MCF 10A (cell line): ENCODE measurements at regions of chr11 and their contacts with region 1.

Region 1: DNA sequence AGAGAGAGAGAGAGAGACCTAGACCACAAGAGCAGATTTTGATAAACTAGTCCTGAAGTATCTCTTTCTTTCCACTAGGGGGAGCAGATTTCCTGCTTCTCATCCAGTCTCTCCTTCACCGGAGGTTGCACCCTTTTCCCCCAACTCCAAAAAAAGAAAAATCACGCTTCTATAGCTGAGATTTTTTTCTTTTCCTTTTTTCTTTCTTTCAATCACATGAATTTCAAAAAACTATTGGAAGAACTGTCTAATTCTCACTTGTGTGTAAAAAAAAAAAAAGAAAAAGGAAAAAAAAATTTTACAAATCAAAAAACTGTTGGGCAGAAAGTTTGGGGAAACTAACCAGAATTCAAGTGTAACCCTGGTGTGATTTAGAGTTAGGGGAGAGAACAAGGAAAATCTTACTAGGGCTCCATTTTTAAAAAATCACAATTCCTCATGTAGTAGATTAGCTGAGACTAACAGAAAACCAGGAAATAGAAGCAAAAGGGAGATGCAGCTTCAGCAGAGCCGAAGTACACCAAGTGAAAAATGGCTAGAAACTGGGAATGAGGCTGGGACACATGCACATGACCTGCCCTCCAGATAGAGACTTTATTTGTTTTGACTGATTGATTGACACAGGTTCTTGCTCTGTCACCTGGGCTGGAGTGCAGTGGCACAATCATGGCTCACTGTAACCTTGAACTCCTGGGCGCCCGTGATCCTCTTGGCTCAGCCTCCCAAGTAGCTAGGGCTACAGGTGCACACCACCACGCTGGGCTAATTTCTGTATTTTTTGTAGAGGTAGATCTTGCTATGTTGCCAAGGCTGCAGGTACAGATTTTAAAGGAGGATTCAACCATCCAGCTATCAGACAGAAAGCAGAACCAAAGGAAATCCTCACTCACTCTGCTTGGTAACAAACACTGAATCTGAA is 27.1 kb downstream of the SDHD start:
- DNase-seq: peak; percentile 75
- H3K4me3 Mint-ChIP-seq: no peak overlapping the region
- H3K27ac Mint-ChIP-seq: no peak overlapping the region
- H3K4me1 Mint-ChIP-seq: no peaks in the 10 kb centered on the region
- H3K27me3 Mint-ChIP-seq: no peaks in the 10 kb centered on the region
- CTCF ChIP-seq: peak; percentile 73

Region 2: GRCh38 chr11:112100462-112100861 is 13.3 kb before region 1 on chr11:
- CTCF ChIA-PET with region 1: interaction called, 27 read pairs
- POLR2A ChIA-PET with region 1: interaction called, 3 read pairs
- intact Hi-C with region 1: no loop called
- DNase-seq: no peak
- H3K4me3 Mint-ChIP-seq: no peak overlapping the region
- H3K27ac Mint-ChIP-seq: no peak overlapping the region
- H3K4me1 Mint-ChIP-seq: no peaks in the 10 kb centered on the region
- H3K27me3 Mint-ChIP-seq: no peaks in the 10 kb centered on the region
- CTCF ChIP-seq: no peak

Region 3: GRCh38 chr11:112128483-112129121 is 14.8 kb after region 1 on chr11:
- CTCF ChIA-PET with region 1: interaction called, 15 read pairs
- POLR2A ChIA-PET with region 1: interaction called, 39 read pairs
- intact Hi-C with region 1: no loop called
- DNase-seq: peak; percentile 85
- H3K4me3 Mint-ChIP-seq: peak overlapping the region; percentile 13
- H3K27ac Mint-ChIP-seq: peak overlapping the region; percentile 57
- H3K4me1 Mint-ChIP-seq: peaks cover 32% of the 10 kb centered on the region
- H3K27me3 Mint-ChIP-seq: no peaks in the 10 kb centered on the region
- CTCF ChIP-seq: no peak

Region 4: GRCh38 chr11:112156956-112157766 is 43.4 kb after region 1 on chr11:
- CTCF ChIA-PET with region 1: interaction called, 9 read pairs
- POLR2A ChIA-PET with region 1: interaction called, 73 read pairs
- intact Hi-C with region 1: no loop called
- DNase-seq: peak; percentile 98
- H3K4me3 Mint-ChIP-seq: peak overlapping the region; percentile 51
- H3K27ac Mint-ChIP-seq: peak overlapping the region; percentile 76
- H3K4me1 Mint-ChIP-seq: peaks cover 39% of the 10 kb centered on the region
- H3K27me3 Mint-ChIP-seq: no peaks in the 10 kb centered on the region
- CTCF ChIP-seq: no peak

Region 5: GRCh38 chr11:112174789-112175598 is 61.2 kb after region 1 on chr11 and contains the start of gene BCO2:
- CTCF ChIA-PET with region 1: interaction called, 7 read pairs
- POLR2A ChIA-PET with region 1: interaction called, 9 read pairs
- intact Hi-C with region 1: loop called (anchors 1 kb)
- DNase-seq: peak; percentile 83
- H3K4me3 Mint-ChIP-seq: peak within 1 kb of the TSS; percentile 66
- H3K27ac Mint-ChIP-seq: peak within 1 kb of the TSS; percentile 93
- H3K4me1 Mint-ChIP-seq: peaks cover 15% of the 10 kb centered on the region
- H3K27me3 Mint-ChIP-seq: no peaks in the 10 kb centered on the region
- CTCF ChIP-seq: peak; percentile 83
- total RNA-seq, gene BCO2: 0.93 TPM in 1 of 2 replicates, not detected in the other

Region 6: DNA sequence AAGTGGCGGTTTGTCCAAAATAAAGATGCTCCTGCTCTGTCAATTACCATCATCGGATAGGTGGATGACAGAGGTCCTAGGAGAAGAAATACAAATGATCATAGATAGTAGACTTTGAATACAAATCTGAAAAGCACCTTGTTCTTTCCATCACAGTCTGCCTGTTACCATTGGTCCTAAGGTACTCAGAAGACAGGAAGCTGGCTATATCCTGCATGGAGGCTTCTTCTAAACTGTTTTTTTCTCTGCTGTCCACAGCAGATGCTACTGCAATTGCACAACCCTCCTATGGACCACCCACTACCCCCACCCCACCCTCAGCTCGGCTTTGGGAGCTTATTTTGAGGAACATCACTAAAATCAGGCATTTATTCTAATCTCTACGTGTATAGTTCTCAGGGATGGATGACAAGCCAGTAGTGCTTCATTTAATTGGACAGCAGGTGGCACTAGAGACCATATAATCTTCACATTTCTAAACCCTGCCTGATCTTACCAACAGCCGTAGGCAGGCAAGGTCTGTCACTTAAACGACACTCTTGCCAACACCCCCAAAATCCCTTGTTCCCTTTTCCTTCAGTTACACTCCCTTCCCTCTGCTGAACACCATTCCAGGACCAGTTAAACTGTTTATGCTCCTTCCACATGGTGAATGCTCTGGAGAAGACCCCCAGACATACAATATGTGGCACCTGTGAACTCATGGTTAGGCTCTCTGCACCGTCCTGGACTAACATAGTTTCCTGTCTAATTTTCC is 105.9 kb after region 1 on chr11:
- CTCF ChIA-PET with region 1: interaction called, 25 read pairs
- POLR2A ChIA-PET with region 1: interaction called, 6 read pairs
- intact Hi-C with region 1: loop called (anchors 1 kb)
- DNase-seq: peak; percentile 84
- H3K4me3 Mint-ChIP-seq: no peak overlapping the region
- H3K27ac Mint-ChIP-seq: peak overlapping the region; percentile 21
- H3K4me1 Mint-ChIP-seq: peaks cover 27% of the 10 kb centered on the region
- H3K27me3 Mint-ChIP-seq: no peaks in the 10 kb centered on the region
- CTCF ChIP-seq: peak; percentile 76

Region 7: DNA sequence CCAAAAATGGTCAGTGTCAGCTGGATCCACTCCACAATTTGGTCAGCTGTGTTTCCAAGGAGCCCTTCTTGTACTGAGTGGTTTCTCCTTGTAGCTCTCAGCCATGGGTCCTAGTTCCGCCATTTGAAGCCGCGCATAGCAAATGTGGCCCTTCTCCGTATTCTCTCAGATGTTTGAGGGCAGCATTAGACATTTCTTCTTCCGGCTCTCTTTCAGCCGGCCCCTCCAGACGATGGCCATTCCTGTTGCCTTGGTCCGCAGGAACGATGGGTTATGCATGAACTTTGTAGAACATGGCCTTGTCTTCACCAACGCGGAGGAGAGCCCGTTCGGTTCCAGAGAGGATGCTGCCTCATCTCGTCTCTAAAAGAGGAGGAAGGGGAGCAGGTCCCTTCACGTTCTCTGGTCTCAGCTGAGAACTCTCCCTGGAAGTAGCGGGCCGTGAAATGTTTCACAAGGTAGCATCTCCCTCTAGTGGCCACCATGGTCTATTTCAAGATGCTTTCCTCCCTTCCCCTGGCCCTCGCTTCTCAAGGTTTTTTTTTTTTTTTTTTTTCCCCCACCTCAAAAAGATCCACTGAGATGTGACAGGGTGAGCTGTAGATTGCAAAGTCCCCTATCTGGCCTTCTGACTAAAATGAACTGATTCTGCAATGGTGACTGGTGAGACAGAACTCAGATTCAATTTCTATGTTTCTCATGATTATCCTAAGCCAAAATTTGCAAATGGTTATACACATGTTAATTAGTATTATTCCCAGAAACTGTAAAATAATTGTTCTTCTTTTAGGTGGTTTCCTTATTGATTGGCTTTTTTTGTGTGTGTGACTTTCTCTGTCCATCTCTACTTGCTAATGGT is 166.7 kb after region 1 on chr11:
- CTCF ChIA-PET with region 1: interaction called, 130 read pairs
- POLR2A ChIA-PET with region 1: no interaction called
- intact Hi-C with region 1: loop called (anchors 1 kb)
- DNase-seq: peak; percentile 85
- H3K4me3 Mint-ChIP-seq: peak overlapping the region; percentile 78
- H3K27ac Mint-ChIP-seq: no peak overlapping the region
- H3K4me1 Mint-ChIP-seq: peaks cover 5% of the 10 kb centered on the region
- H3K27me3 Mint-ChIP-seq: peaks cover 5% of the 10 kb centered on the region
- CTCF ChIP-seq: peak; percentile 50